ENCODE measurements at regions of chr1 and their contacts with region 1.

Region 1: DNA sequence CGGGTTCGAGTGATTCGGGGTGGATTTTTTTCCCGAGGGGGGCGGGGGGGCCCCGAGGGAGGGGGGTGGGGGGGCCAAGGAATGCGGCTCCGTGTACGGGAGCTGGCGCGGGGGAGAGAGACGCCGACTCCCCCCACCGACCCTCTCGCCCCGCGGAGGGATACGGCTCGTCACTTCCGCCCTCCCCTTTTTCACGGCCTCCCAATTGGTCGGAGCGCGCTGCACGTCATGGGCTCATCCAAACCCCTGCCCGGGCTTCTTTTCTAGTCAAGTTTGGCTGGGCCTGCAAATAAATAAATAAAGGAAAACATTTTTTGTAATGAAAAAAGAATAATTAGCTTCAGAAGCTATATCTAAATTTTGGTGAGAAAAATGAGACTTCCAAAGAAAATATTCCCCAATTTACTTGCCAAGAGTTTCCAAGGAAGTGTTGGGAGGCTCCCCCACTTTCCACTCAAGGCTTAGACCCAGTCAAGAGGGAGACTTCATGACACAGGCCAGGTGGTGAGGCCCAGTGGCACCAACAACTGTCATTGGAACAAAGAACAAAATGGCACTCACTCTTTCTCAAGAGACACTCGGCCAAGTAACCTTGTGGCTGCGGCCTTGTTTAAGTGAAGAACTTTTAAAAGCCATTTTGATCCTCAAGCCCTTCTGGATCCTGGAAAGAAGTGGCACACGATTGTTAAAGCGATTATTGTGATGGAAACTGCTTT is at the start of gene POGZ:
- DNase-seq: peak; percentile 92 to 97 (median 95)
- H3K4me3 ChIP-seq: peak within 1 kb of the TSS; percentile 62 to 89 (median 77)
- H3K27ac ChIP-seq: peak within 1 kb of the TSS; percentile 90 to 99 (median 97)
- H3K27me3 ChIP-seq: no peaks in the 10 kb centered on the region
- CTCF ChIP-seq: peak in 20 of 56 donors; percentile 5 to 43 (median 17)
- total RNA-seq, gene POGZ: 132 to 285 (median 204) TPM

Region 2: DNA sequence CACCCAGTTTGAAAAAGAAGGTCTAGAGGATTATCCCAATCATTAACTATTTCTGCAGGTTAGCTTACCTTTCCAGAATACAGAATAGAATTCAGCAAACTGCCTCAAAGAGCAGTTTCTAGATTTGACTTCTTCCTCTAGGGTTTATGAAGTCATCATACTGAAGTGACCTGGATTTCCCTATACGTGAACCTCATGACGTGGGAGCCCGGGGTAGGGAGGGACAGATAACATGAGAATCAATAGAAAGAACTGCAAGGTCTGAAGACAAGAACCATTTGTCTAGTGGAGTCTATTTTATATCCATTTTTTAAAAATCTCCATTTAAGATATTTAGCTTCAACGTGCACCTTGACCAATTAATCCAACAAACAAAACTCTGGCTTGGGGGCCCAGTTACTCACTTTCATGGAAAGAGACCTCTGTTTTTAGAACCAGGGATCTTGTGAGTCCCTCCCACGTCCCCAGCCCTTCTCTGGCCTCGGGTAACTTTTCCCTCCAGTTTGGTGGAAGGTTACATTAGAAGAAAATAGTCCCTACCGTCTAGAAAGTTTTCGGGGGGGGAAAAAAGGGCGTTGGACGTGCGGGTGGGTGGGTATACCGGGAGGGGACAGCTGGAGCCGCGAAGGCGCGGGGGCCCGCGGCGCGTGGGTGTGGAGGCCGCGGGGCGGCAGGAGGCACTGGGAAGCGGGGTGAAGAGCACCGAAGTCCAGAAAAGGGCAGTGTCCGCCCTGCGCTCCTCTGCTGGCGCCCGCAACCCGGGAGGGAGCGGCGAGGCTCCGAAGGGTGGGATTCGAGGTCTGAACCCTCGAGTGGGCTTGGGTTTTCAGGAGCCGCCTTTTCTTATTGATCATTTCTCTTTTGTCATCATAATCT is 13.6 kb after region 1 on chr1:
- intact Hi-C with region 1: loop called in 1 of 2 experiments (anchors 1 kb)
- DNase-seq: peak in 2 of 10 donors; percentile 13 to 53
- H3K4me3 ChIP-seq: peak overlapping the region; percentile 51 to 81 (median 65)
- H3K27ac ChIP-seq: peak overlapping the region in 46 of 59 donors; percentile 2 to 88 (median 68)
- H3K27me3 ChIP-seq: peaks cover 0 to 5% (median 0%) of the 10 kb centered on the region in 45 donors
- CTCF ChIP-seq: peak in 3 of 56 donors; percentile 15 to 20 (median 17)

Region 3: DNA sequence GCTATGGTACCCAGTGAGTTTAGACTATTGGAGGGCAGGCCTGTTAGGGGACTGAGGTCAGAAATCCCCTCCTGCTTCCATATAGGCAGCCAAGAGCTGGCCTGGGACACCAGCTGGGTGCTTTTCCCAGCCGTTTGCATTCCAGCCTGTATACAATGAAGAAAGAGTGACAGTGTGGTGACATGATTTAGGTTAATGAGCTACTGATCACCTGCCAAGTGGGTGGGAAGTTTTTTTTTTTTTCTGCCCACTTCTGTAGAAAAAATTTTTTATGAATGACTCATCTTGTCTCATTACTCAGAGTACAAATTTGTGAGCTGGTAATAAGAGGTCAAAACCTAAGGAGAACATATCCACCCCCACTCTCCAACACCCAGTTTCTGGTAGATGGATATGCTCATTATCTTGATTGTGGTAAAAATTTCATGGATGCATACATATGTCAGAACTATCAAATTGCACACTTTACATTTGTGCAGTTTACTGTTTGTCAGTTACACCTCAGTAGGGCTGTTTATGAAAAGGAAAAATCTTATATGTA is 35.3 kb after region 1 on chr1:
- intact Hi-C with region 1: loop called in 1 of 2 experiments (anchors 5 kb)
- DNase-seq: no peak
- H3K4me3 ChIP-seq: peak overlapping the region in 15 of 59 donors; percentile 3 to 49 (median 20)
- H3K27ac ChIP-seq: peak overlapping the region; percentile 40 to 99 (median 91)
- H3K27me3 ChIP-seq: no peaks in the 10 kb centered on the region
- CTCF ChIP-seq: no peak

Region 4: DNA sequence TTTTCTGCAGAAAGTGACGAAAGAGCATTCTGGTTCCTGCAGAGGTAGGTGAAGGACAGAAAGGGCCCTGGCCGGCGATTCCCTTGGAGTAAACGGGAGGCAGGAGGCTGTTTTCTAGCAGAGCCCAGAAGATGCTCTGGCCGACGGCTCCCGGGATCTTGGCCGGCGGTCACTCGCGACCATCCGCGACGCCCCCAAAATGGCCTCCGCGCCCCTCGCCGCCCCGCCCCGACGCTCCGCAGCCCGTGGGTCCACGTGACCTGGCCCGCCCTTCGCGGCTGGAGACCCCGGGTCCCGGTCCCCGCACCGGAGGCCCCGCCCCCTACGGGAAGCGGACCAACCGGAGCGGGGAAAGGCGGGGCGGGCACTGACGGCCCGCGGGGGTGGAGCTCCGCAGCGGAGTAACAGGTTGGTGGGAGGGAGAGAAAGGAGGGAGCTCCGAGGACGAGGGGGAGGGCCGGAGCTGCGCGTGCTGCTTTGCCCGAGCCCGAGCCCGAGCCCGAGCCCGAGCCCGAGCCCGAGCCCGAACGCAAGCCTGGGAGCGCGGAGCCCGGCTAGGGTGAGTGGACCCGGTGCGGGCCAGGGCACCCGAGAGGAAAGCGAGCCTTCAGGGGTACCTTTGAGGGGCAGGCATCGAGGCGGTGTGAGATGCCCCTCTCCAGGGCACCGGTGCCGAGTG is 51.6 kb after region 1 on chr1 and contains the start of gene CGN:
- intact Hi-C with region 1: loop called (anchors 2 kb)
- DNase-seq: peak; percentile 82 to 97 (median 92)
- H3K4me3 ChIP-seq: peak within 1 kb of the TSS; percentile 46 to 90 (median 77)
- H3K27ac ChIP-seq: peak within 1 kb of the TSS; percentile 63 to 97 (median 92)
- H3K27me3 ChIP-seq: no peaks in the 10 kb centered on the region
- CTCF ChIP-seq: peak in 9 of 56 donors; percentile 1 to 26 (median 20)
- total RNA-seq, gene CGN: 1.9 to 21.3 (median 7.9) TPM

Region 5: GRCh38 chr1:151539990-151540981 is 80.8 kb after region 1 on chr1 and contains the start of gene TUFT1:
- intact Hi-C with region 1: loop called in 1 of 2 experiments (anchors 5 kb)
- DNase-seq: peak; percentile 77 to 95 (median 92)
- H3K4me3 ChIP-seq: peak within 1 kb of the TSS; percentile 58 to 94 (median 80)
- H3K27ac ChIP-seq: peak within 1 kb of the TSS in 38 of 59 donors; percentile 1 to 75 (median 54)
- H3K27me3 ChIP-seq: no peaks in the 10 kb centered on the region
- CTCF ChIP-seq: peak in 19 of 56 donors; percentile 5 to 43 (median 19)
- total RNA-seq, gene TUFT1: 5.0 to 13.9 (median 9.3) TPM

Region 6: GRCh38 chr1:151611832-151612500 is 152.5 kb after region 1 on chr1 and contains the start of gene SNX27:
- intact Hi-C with region 1: loop called in 1 of 2 experiments (anchors 10 kb)
- DNase-seq: peak; percentile 87 to 96 (median 94)
- H3K4me3 ChIP-seq: peak within 1 kb of the TSS; percentile 62 to 99 (median 93)
- H3K27ac ChIP-seq: peak within 1 kb of the TSS; percentile 68 to 98 (median 94)
- H3K27me3 ChIP-seq: no peaks in the 10 kb centered on the region
- CTCF ChIP-seq: peak in 22 of 56 donors; percentile 8 to 54 (median 19)
- total RNA-seq, gene SNX27: 71.9 to 121 (median 93.6) TPM

Measured in dorsolateral prefrontal cortex (tissue), 120 donors.